ENCODE measurements at regions of chr2 and their contacts with region 1.

Region 1: DNA sequence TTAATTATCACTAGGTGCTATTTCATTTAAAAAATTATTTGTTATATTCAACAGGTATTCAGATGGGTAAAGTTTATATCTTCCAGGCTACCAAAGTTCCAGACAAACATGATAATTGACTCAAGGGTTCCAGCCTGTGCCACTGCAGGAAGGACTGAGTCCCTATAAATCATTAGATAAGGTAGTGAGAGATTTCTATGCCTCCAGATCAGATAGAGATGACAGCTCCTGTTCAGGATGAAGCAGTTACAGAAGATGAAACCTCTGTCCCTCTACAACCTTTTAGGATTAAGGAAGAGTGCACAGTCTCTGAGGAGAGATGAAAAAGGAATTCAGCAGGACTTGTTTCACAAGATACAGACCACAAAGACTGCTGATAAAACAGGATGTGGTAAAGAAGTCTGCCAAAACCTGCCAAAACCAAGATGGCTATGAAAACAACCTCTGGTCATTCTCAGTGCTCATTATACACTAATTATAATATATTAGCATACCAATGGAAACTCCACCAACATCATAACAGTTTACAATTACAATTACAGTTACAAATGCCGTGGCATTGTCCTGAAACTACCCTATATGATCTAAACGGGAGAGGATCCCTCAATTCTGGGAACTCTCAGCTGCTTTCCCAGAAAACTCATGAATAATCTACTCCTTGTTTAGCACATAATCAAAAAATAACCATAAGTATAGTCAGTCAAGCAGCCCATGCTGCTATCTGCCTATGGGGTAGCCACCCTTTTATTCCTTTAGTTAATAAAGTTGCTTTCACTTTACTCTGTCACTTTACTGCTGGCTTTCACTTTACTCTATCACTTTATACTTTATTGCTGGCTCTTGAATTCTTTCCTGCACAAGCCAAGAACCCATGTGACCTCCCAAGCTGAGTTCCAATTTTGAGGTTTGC is 288.5 kb downstream of the PDE11A start:
- DNase-seq: peak; percentile 23
- H3K4me3 Mint-ChIP-seq: peak overlapping the region; percentile 29
- H3K27ac Mint-ChIP-seq: peak overlapping the region; percentile 39
- H3K4me1 Mint-ChIP-seq: peaks cover 33% of the 10 kb centered on the region
- H3K27me3 Mint-ChIP-seq: peaks cover 7% of the 10 kb centered on the region

Region 2: DNA sequence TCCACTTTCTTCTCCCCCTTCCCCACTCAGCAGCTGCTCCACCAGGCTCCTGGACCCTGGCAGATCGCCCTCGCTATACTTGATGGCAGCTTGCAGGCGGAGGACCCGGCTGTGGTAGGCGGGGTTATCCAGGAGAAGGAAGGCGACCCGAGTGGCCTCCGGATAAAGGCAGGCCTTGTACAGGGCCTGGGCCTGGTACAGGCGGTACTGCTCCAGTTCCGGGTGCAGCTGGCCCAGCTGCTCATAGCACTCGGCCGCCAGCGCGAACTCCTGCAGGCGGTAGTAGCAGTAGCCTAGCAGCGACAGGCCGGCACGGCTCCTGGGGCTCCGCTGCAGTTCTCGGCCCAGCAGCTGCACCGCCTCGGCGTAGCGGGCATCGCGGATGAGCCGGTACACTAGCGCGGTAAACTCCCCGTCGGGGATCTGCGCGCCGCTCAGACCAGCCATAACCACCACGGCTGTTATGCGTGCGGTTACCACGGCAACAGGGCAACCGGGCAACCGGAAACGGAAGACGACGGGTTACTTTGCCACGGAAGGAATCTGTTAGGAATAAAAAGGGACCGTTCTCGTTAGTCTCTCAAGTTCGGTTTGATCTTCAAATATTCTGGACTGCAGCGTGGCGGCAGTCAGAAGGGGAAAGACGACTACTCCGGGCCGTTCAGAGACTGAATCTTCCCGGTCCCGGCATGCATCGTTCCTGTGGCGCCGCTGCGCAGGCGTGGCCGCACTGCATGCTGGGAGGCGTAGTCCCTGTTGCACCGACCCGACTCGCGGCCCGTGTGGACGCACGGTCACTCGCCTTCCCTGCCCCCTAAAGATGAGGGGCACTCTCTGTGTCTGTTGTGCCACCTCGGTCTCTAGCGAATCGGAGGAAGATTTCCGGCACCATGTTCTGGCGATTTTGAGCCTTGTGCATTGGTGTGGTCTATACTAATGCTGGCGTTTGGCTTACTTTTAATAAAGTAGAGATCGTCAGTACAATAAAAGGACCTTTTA is 165.5 kb before region 1 on chr2:
- CTCF ChIA-PET with region 1: no interaction called
- POLR2A ChIA-PET with region 1: no interaction called
- DNase-seq: peak; percentile 92
- H3K4me3 Mint-ChIP-seq: peak overlapping the region; percentile 83
- H3K27ac Mint-ChIP-seq: peak overlapping the region; percentile 87
- H3K4me1 Mint-ChIP-seq: peaks cover 6% of the 10 kb centered on the region
- H3K27me3 Mint-ChIP-seq: peaks cover 14% of the 10 kb centered on the region

Region 3: DNA sequence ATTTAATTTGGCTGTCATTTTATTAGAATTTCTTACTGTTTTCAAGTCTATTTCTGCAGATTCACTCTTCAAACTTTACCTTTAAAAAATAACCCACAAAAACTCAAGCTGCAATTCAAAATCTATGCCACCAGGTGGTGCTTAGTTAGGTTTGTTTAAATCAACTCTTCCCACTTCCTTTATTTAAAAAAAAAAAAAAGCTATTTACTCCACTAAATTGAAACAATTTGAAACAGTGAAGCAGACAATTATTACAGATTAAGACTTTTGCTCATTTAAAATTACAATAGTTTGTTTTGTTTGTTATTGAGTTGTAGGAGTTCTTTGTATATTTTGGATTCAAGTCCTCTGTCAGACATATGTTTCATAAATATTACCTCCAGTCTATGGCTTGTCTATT is 11.6 kb before region 1 on chr2:
- CTCF ChIA-PET with region 1: interaction called, 20 read pairs
- POLR2A ChIA-PET with region 1: interaction called, 5 read pairs
- DNase-seq: no peak
- H3K4me3 Mint-ChIP-seq: no peak overlapping the region
- H3K27ac Mint-ChIP-seq: no peak overlapping the region
- H3K4me1 Mint-ChIP-seq: peaks cover 2% of the 10 kb centered on the region
- H3K27me3 Mint-ChIP-seq: peaks cover 16% of the 10 kb centered on the region

Region 4: DNA sequence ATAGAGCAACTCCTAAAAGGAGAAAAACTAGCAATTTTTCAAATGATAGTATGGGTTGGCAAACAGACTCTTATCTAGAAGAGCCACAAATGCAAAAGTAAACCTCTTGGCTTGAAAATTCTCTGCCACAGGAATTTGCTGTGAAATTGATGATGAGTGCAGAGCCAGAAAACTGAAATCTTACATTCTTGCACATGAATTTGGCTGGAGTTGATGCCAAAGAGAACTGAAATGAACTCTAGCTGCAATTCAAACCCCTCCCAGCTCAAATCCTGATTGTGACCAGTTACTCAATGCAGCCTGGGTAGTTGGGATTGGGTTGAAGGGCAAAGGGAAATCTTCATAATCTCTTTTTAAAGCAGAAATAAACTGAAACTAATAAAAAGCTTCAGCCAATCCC is 21.9 kb after region 1 on chr2:
- CTCF ChIA-PET with region 1: no interaction called
- POLR2A ChIA-PET with region 1: no interaction called
- DNase-seq: no peak
- H3K4me3 Mint-ChIP-seq: no peak overlapping the region
- H3K27ac Mint-ChIP-seq: no peak overlapping the region
- H3K4me1 Mint-ChIP-seq: no peaks in the 10 kb centered on the region
- H3K27me3 Mint-ChIP-seq: peaks cover 40% of the 10 kb centered on the region

Region 5: DNA sequence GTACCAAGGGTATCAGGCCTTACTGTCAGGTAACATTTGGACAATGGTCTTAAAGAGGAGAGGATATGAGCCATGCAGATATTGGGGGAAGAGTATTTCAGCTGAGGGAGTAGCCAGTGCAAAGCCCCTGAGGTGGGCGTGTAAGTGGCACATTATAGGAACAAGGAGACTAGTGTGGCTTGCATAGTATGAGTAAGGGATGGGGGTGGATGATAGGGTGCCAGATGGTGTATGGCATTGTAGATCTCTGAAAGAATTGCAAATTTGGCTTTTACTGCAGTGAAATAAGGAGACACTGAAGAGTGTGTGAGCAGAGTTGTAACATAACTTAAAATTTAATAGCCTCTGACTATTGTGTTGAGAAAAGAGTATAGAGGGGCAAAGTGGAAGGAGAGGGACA is 44.5 kb after region 1 on chr2:
- CTCF ChIA-PET with region 1: no interaction called
- POLR2A ChIA-PET with region 1: no interaction called
- DNase-seq: no peak
- H3K4me3 Mint-ChIP-seq: no peak overlapping the region
- H3K27ac Mint-ChIP-seq: no peak overlapping the region
- H3K4me1 Mint-ChIP-seq: no peaks in the 10 kb centered on the region
- H3K27me3 Mint-ChIP-seq: peaks cover 6% of the 10 kb centered on the region

Region 6: GRCh38 chr2:177970670-177971454 is 186.8 kb after region 1 on chr2:
- CTCF ChIA-PET with region 1: no interaction called
- POLR2A ChIA-PET with region 1: no interaction called
- DNase-seq: no peak
- H3K4me3 Mint-ChIP-seq: no peak overlapping the region
- H3K27ac Mint-ChIP-seq: no peak overlapping the region
- H3K4me1 Mint-ChIP-seq: no peaks in the 10 kb centered on the region
- H3K27me3 Mint-ChIP-seq: no peaks in the 10 kb centered on the region